Activated CD8-positive, alpha-beta T cell treated with anti-CD3 and anti-CD28 coated beads, Interleukin-2, amount 10 ng/mL, durations not matched to agents 7 days and 5 days (primary cell): ENCODE measurements at regions of chr9 and their contacts with region 1.

Region 1: DNA sequence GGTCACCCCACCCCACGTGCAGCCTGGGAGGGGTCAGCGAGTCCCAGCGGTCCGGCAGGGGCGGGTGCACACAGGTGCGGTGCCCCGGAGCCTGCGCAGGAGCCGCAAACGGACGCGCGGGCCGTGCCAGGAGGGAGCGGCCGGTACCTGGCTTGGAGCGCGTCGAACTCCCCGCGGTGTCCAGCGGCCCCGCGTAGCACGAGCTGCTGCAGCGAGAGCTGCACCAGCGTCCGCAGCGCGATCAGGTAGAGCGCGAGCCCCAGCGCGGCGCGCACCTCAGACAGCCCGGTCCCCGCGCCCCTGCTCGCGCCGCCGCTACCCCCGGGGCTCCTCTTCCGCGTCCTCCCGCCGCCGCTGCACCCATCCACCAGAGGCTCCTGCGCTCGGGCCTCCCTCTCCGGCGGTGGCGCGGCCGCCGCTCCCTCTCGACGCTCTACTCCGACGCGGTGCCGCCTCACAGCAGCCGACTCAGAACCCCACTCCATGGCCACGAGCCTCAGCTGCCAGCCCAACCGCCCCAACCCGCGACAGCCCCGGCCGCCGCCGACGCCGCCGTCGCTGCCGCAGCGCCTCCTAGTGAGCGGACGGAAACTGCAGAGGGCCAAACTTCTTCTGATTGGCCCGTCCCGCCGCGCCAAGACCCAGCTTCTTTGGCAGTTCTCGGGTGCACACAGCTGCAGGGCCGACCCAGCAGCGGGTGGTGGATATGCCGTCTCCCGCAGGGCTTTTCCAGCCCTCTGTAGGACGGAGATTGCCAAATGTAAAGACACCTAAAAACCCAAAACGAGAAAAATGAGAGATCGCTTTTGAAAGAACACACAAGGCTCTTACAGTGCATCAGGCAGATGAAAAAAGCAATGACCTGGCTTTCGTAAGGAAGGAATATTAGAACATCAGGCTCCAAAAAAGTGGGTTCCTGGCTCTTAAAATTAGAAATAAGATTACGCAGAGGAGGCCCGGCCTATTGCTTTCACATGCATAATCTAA is at the start of gene ERMP1:
- DNase-seq: peak; percentile 90
- ATAC-seq: peak; percentile 90
- H3K4me3 Mint-ChIP-seq: peak within 1 kb of the TSS; percentile 97
- H3K27ac Mint-ChIP-seq: peak within 1 kb of the TSS; percentile 78
- H3K4me1 Mint-ChIP-seq: peaks cover 58% of the 10 kb centered on the region
- H3K27me3 Mint-ChIP-seq: peaks cover 3% of the 10 kb centered on the region
- total RNA-seq, gene ERMP1: 28.0 to 30.6 TPM

Region 2: DNA sequence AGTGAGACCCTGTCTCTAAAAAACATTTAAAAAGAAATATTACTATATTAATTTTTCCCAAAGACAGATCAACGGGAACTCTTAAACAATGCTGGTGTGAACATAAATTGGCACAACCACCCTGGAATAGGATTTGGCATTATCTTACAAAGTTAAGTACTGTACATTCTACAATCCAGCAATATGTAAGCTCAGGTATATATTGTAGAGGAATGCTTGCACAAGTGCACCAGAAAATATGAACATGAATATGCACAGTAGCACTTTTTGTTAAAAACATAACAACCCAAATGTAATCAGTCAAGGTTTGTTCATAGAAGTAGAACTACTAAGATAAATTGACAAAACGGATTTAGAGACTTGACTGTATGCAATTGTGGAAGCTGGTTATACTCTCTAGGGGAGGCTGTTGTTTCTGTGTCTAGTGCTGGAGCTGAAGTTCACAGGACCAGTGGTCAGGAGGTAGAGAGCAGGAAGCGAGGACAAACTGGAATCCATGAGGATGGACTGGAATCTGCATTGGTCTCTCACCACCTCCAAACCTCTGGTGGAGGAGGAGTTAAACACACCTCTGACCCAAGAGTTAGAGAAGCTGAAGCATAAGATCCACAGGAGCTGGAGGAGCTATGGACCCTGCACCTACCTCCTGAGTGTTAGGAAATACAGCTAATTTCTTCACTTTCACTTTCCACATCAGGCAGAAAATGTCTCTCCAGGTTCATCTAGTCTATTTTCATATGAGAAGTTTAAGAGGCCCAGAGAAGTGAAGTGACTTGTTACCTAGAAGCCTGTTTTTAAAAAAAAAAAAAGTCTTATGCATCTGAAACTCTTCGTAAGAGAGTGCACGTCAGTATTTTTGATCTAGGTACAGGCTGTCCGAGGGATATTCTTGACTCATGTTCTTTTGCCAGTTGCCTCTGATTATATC is 224.3 kb before region 1 on chr9:
- CTCF ChIA-PET with region 1: interaction called, 10 read pairs
- POLR2A ChIA-PET with region 1: no interaction called
- DNase-seq: no peak
- ATAC-seq: peak; percentile 80
- H3K4me3 Mint-ChIP-seq: peak overlapping the region; percentile 71
- H3K27ac Mint-ChIP-seq: peak overlapping the region; percentile 84
- H3K4me1 Mint-ChIP-seq: peaks cover 20% of the 10 kb centered on the region
- H3K27me3 Mint-ChIP-seq: no peaks in the 10 kb centered on the region

Region 3: GRCh38 chr9:5813836-5814235 is 19.0 kb before region 1 on chr9:
- CTCF ChIA-PET with region 1: interaction called, 13 read pairs
- POLR2A ChIA-PET with region 1: no interaction called
- DNase-seq: no peak
- ATAC-seq: no peak
- H3K4me3 Mint-ChIP-seq: no peak overlapping the region
- H3K27ac Mint-ChIP-seq: no peak overlapping the region
- H3K4me1 Mint-ChIP-seq: peaks cover 12% of the 10 kb centered on the region
- H3K27me3 Mint-ChIP-seq: no peaks in the 10 kb centered on the region

Region 4: GRCh38 chr9:5851445-5851844 is 18.6 kb after region 1 on chr9:
- CTCF ChIA-PET with region 1: interaction called, 46 read pairs
- POLR2A ChIA-PET with region 1: interaction called, 7 read pairs
- DNase-seq: peak; percentile 73
- ATAC-seq: peak; percentile 92
- H3K4me3 Mint-ChIP-seq: peak overlapping the region; percentile 37
- H3K27ac Mint-ChIP-seq: peak overlapping the region; percentile 75
- H3K4me1 Mint-ChIP-seq: peaks cover 66% of the 10 kb centered on the region
- H3K27me3 Mint-ChIP-seq: no peaks in the 10 kb centered on the region

Region 5: DNA sequence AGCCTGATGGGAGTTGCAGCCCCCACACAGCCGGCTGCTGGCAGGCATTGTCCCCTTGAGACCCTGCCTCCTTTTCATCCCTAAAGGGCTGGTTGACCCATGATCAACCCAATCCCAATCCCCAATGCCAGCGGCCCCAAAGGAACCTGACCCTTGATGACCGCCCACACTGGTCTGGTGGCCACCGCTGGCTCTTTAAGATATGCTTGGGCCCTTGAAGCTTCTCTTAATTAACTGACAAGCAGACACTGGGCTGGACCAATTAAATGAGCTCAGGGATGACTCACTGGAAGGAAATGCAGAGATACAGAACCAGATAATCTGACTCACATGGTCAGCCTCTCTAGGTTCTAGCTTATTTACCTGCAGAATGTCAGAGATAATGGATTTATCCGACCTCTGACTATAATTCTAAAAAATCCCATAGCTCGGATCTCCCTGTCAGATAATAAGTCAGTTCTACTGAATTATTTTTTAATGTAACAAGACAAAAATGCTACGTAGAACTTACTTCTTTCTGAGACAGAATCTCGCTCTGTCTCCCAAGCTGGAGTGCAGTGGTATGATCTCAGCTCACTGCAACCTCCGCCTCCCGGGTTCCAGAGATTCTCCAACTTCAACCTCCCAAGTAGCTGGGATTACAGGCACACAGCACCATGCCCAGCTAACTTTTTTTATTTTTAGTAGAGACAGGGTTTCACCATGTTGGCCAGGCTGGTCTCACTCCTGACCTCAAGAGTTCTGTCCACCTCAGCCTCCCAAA is 46.8 kb after region 1 on chr9:
- CTCF ChIA-PET with region 1: interaction called, 67 read pairs
- POLR2A ChIA-PET with region 1: no interaction called
- DNase-seq: peak; percentile 27
- ATAC-seq: peak; percentile 71
- H3K4me3 Mint-ChIP-seq: no peak overlapping the region
- H3K27ac Mint-ChIP-seq: no peak overlapping the region
- H3K4me1 Mint-ChIP-seq: peaks cover 27% of the 10 kb centered on the region
- H3K27me3 Mint-ChIP-seq: no peaks in the 10 kb centered on the region